Heart right ventricle (tissue), 16 donors: ENCODE measurements at regions of chr7 and their contacts with region 1.

Region 1: GRCh38 chr7:82729172-82730030 is 285.8 kb upstream of the CACNA2D1 start:
- DNase-seq: no peak
- ATAC-seq: no peak
- H3K4me3 ChIP-seq: no peak overlapping the region
- H3K27ac ChIP-seq: no peak overlapping the region
- H3K4me1 ChIP-seq: no peaks in the 10 kb centered on the region
- H3K27me3 ChIP-seq: no peaks in the 10 kb centered on the region
- CTCF ChIP-seq: peak in 8 of 9 donors; percentile 20 to 61 (median 53)

Region 2: GRCh38 chr7:81482600-81483186 is 1246.7 kb before region 1 on chr7:
- intact Hi-C with region 1: loop called in 3 of 10 experiments (anchors 5 to 10 kb)
- DNase-seq: no peak
- ATAC-seq: no peak
- H3K4me3 ChIP-seq: no peak overlapping the region
- H3K27ac ChIP-seq: peak overlapping the region in 1 of 10 donors; percentile 2
- H3K4me1 ChIP-seq: peaks cover 0 to 22% (median 5%) of the 10 kb centered on the region in 9 donors
- H3K27me3 ChIP-seq: no peaks in the 10 kb centered on the region
- CTCF ChIP-seq: peak; percentile 34 to 82 (median 67)

Region 3: DNA sequence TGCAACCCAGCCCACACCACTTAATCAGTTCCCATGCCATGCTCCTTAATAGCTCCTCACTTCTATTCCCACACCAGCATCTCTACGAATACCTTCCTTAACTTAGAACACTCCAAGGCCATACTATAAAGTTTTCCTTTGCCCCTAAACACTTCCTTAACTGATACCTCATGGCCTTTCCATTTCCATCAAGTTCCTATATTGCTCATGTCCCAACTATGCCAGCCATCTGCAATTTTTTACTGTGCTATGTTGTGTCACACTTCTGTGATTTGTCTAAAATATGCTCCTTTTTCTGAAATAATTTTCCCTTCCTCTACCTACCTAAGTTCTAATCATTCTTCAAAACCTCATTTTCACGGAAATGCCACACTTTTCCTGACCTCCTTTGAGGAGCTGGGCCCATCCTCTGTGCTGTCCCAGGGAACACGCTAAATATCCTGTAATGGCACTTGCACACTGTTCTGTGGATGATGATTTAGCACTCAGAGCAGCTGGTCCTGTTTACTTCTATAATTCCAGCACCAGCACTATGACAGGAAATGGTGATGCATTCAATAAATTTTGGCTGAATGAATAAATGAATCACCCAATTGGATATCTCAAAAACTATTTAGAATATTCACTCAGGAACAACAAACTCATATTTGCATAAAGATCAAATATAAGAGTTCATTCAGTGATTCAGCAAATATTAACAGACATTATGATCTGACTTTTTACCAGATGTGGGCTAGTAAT is 693.1 kb before region 1 on chr7:
- intact Hi-C with region 1: loop called in 4 of 10 experiments (anchors 5 to 10 kb)
- DNase-seq: no peak
- ATAC-seq: peak in 1 of 8 donors; percentile 29
- H3K4me3 ChIP-seq: no peak overlapping the region
- H3K27ac ChIP-seq: no peak overlapping the region
- H3K4me1 ChIP-seq: peaks cover 0 to 3% (median 0%) of the 10 kb centered on the region in 9 donors
- H3K27me3 ChIP-seq: no peaks in the 10 kb centered on the region
- CTCF ChIP-seq: no peak

Region 4: GRCh38 chr7:82044497-82045080 is 684.8 kb before region 1 on chr7:
- intact Hi-C with region 1: loop called in 5 of 10 experiments (anchors 5 to 10 kb)
- DNase-seq: peak in 1 of 2 donors; percentile 42
- ATAC-seq: peak in 5 of 8 donors; percentile 42 to 65 (median 55)
- H3K4me3 ChIP-seq: no peak overlapping the region
- H3K27ac ChIP-seq: no peak overlapping the region
- H3K4me1 ChIP-seq: peaks cover 0 to 15% (median 5%) of the 10 kb centered on the region in 9 donors
- H3K27me3 ChIP-seq: no peaks in the 10 kb centered on the region
- CTCF ChIP-seq: peak; percentile 35 to 83 (median 75)

Region 5: GRCh38 chr7:82605247-82605872 is 124.0 kb before region 1 on chr7:
- intact Hi-C with region 1: loop called in 2 of 10 experiments (anchors 10 kb)
- DNase-seq: peak in 1 of 2 donors; percentile 8
- ATAC-seq: no peak
- H3K4me3 ChIP-seq: no peak overlapping the region
- H3K27ac ChIP-seq: no peak overlapping the region
- H3K4me1 ChIP-seq: no peaks in the 10 kb centered on the region
- H3K27me3 ChIP-seq: no peaks in the 10 kb centered on the region
- CTCF ChIP-seq: peak; percentile 55 to 82 (median 70)

Region 6: DNA sequence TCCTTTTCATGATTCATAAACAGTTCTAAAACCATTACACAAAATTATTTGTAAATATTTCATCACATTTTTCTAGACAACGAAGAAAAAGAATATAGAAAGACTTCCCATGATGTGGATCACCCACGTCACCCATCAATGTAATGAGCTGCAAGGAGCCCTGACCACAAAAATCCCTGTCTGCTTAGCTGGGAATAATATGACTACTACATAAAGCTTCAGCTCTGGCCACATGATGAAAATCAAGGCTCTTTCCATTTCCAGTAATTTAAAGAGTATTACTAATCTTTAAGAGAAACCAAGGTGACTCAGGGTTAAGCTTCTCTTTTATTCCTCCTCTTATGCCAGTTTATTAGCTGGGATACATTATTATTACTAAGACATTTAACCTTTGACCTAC is 105.1 kb before region 1 on chr7:
- intact Hi-C with region 1: loop called in 1 of 10 experiments (anchors 10 kb)
- DNase-seq: no peak
- ATAC-seq: no peak
- H3K4me3 ChIP-seq: no peak overlapping the region
- H3K27ac ChIP-seq: no peak overlapping the region
- H3K4me1 ChIP-seq: no peaks in the 10 kb centered on the region
- H3K27me3 ChIP-seq: no peaks in the 10 kb centered on the region
- CTCF ChIP-seq: no peak